Sigmoid colon (tissue), 7 donors: ENCODE measurements at regions of chr10 and their contacts with region 1.

Region 1: DNA sequence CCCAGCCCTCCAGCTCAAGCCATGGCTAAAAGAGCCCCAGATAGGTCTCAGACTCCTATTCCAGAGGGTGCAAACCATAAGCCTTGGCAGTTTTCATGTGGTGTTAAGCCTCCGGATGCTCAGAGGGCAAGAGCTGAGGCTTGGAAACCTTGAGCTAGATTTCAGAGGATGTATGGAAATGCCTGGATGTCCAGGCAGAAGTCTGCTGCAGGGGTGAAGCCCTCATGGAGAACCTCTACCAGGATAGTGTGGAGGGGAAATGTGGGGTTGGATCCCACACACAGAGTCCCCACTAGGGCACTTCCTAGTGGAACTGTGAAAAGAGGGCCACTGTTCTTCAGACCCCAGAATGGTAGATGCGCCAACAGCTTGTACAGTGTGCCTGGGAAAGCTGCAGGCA is 13.2 kb upstream of the HPSE2 start:
- DNase-seq: no peak
- H3K4me3 ChIP-seq: no peak overlapping the region
- H3K27ac ChIP-seq: no peak overlapping the region
- H3K4me1 ChIP-seq: no peaks in the 10 kb centered on the region
- H3K27me3 ChIP-seq: no peaks in the 10 kb centered on the region
- CTCF ChIP-seq: no peak
- EP300 ChIP-seq: no peak
- POLR2A ChIP-seq: no peak

Region 2: GRCh38 chr10:98460837-98461499 is 787.9 kb before region 1 on chr10:
- intact Hi-C with region 1: no loop called
- DNase-seq: peak; percentile 77
- H3K4me3 ChIP-seq: no peak overlapping the region
- H3K27ac ChIP-seq: peak overlapping the region; percentile 33 to 71 (median 48)
- H3K4me1 ChIP-seq: peaks cover 0 to 16% (median 10%) of the 10 kb centered on the region in 4 donors
- H3K27me3 ChIP-seq: no peaks in the 10 kb centered on the region
- CTCF ChIP-seq: no peak
- EP300 ChIP-seq: no peak
- POLR2A ChIP-seq: no peak

Region 3: GRCh38 chr10:98790802-98791201 is 458.0 kb before region 1 on chr10:
- intact Hi-C with region 1: loop called (anchors 5 kb)
- DNase-seq: no peak
- H3K4me3 ChIP-seq: no peak overlapping the region
- H3K27ac ChIP-seq: no peak overlapping the region
- H3K4me1 ChIP-seq: no peaks in the 10 kb centered on the region
- H3K27me3 ChIP-seq: no peaks in the 10 kb centered on the region
- CTCF ChIP-seq: peak in 1 of 4 experiments; percentile 26
- EP300 ChIP-seq: no peak
- POLR2A ChIP-seq: no peak